Right lobe of liver (tissue), 6 donors: ENCODE measurements at regions of chr3 and their contacts with region 1.

Region 1: GRCh38 chr3:195259475-195260279 is 11.3 kb downstream of the XXYLT1 start:
- DNase-seq: peak; percentile 91 to 93 (median 91)
- ATAC-seq: peak; percentile 85 to 94 (median 88)
- H3K4me3 ChIP-seq: peak overlapping the region; percentile 62 to 67 (median 65)
- H3K27ac ChIP-seq: peak overlapping the region; percentile 68 to 84 (median 75)
- H3K4me1 ChIP-seq: peaks cover 0 to 11% (median 4%) of the 10 kb centered on the region in 4 donors
- H3K27me3 ChIP-seq: no peaks in the 10 kb centered on the region
- CTCF ChIP-seq: peak; percentile 45 to 100 (median 78)
- POLR2A ChIP-seq: peak; percentile 63

Region 2: GRCh38 chr3:194682694-194683310 is 576.9 kb before region 1 on chr3:
- intact Hi-C with region 1: loop called in 1 of 2 experiments (anchors 5 kb)
- DNase-seq: peak in 2 of 3 donors; percentile 52 to 68
- ATAC-seq: peak; percentile 76 to 86 (median 83)
- H3K4me3 ChIP-seq: no peak overlapping the region
- H3K27ac ChIP-seq: no peak overlapping the region
- H3K4me1 ChIP-seq: peaks cover 0 to 30% (median 3%) of the 10 kb centered on the region in 4 donors
- H3K27me3 ChIP-seq: peaks cover 0 to 11% of the 10 kb centered on the region in 2 donors
- CTCF ChIP-seq: peak; percentile 83 to 92 (median 86)
- POLR2A ChIP-seq: no peak

Region 3: GRCh38 chr3:195117978-195118581 is 141.6 kb before region 1 on chr3:
- intact Hi-C with region 1: loop called in 1 of 2 experiments (anchors 10 kb)
- DNase-seq: no peak
- ATAC-seq: peak; percentile 53 to 65 (median 58)
- H3K4me3 ChIP-seq: no peak overlapping the region
- H3K27ac ChIP-seq: no peak overlapping the region
- H3K4me1 ChIP-seq: no peaks in the 10 kb centered on the region
- H3K27me3 ChIP-seq: no peaks in the 10 kb centered on the region
- CTCF ChIP-seq: peak in 1 of 4 donors; percentile 7
- POLR2A ChIP-seq: no peak